CD14-positive monocyte (primary cell): ENCODE measurements at regions of chr9 and their contacts with region 1.

Region 1: DNA sequence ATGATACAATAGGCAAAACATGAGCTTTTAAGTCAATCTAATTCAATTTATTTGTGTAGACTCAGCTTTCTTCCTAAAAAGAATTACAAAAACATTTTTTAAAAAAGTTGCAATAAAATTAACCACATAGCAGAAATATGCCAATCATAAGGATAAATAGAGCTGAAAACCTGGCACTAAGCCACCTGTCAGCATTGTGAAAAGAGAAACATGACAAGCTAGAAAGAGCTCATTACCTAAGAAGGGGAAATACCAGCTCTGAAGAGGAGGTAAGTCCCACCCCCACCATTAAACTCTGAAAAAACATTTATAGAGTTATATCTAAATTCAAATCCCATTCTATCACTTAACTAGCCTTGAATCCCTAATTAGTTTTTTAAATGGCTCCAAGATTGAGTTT is 372.9 kb downstream of the OSTF1 start:
- DNase-seq: no peak
- H3K4me3 ChIP-seq: no peak overlapping the region
- H3K4me3 Mint-ChIP-seq: no peak overlapping the region
- H3K27ac ChIP-seq: no peak overlapping the region
- H3K27ac Mint-ChIP-seq: no peak overlapping the region
- H3K4me1 ChIP-seq: peaks cover 0 to under 1% of the 10 kb centered on the region in 2 donors
- H3K4me1 Mint-ChIP-seq: peaks cover 2% of the 10 kb centered on the region
- H3K27me3 ChIP-seq: no peaks in the 10 kb centered on the region
- H3K27me3 Mint-ChIP-seq: peaks cover 0 to 4% (median 0%) of the 10 kb centered on the region in 3 donors
- CTCF ChIP-seq: no peak

Region 2: GRCh38 chr9:75148561-75148960 is 312.6 kb before region 1 on chr9:
- intact Hi-C with region 1: no loop called
- DNase-seq: no peak
- H3K4me3 ChIP-seq: peak overlapping the region in 1 of 3 experiments; percentile 20
- H3K4me3 Mint-ChIP-seq: no peak overlapping the region
- H3K27ac ChIP-seq: peak overlapping the region in 1 of 2 donors; percentile 73
- H3K27ac Mint-ChIP-seq: peak overlapping the region in 3 of 7 donors; percentile 55 to 82 (median 69)
- H3K4me1 ChIP-seq: peaks cover 36 to 64% of the 10 kb centered on the region in 2 donors
- H3K4me1 Mint-ChIP-seq: peaks cover 57% of the 10 kb centered on the region
- H3K27me3 ChIP-seq: no peaks in the 10 kb centered on the region
- H3K27me3 Mint-ChIP-seq: peaks cover 0 to 4% (median 0%) of the 10 kb centered on the region in 3 donors
- CTCF ChIP-seq: no peak

Region 3: GRCh38 chr9:75440914-75441313 is 20.3 kb before region 1 on chr9:
- intact Hi-C with region 1: loop called in 1 of 2 experiments (anchors 1 kb)
- DNase-seq: no peak
- H3K4me3 ChIP-seq: no peak overlapping the region
- H3K4me3 Mint-ChIP-seq: no peak overlapping the region
- H3K27ac ChIP-seq: no peak overlapping the region
- H3K27ac Mint-ChIP-seq: no peak overlapping the region
- H3K4me1 ChIP-seq: no peaks in the 10 kb centered on the region
- H3K4me1 Mint-ChIP-seq: no peaks in the 10 kb centered on the region
- H3K27me3 ChIP-seq: no peaks in the 10 kb centered on the region
- H3K27me3 Mint-ChIP-seq: peaks cover 0 to 3% (median 0%) of the 10 kb centered on the region in 3 donors
- CTCF ChIP-seq: no peak